Left lung (tissue), 14 donors: ENCODE measurements at regions of chr7 and their contacts with region 1.

Region 1: DNA sequence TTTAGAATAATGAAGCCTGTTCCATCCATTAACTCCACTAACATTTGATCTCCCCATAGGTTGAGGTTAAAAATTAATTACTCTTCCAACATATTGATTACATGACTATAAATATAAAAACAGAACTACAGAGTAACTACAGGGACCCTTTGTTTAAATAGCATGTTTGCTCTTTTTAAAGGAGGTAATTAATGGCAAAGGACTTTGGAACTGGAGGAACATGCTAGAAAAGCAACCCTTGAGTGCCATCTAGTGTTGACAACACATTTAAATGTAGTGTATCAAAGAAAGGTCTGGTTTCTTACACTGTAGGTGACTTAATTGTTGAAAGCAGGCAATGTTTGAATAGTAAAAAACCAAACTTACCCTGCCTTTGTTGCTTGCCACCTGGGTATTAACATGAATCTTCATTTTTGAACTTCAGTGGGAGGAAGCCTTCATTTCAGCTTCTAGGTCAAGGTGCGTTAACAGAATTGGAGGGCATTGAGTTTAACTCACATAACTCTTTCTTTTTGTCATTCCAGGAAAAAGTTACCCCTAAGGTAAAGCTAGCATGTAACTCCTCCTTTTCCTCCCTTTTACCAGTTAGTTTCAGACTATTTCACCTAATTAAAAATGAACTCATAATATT is 52.6 kb upstream of the CAPZA2 start:
- DNase-seq: peak in 2 of 4 donors; percentile 68 to 83
- ATAC-seq: peak; percentile 93
- H3K4me3 ChIP-seq: no peak overlapping the region
- H3K27ac ChIP-seq: no peak overlapping the region
- H3K4me1 ChIP-seq: peaks cover 0 to 7% of the 10 kb centered on the region in 2 donors
- H3K27me3 ChIP-seq: no peaks in the 10 kb centered on the region
- CTCF ChIP-seq: peak; percentile 40 to 57

Region 2: DNA sequence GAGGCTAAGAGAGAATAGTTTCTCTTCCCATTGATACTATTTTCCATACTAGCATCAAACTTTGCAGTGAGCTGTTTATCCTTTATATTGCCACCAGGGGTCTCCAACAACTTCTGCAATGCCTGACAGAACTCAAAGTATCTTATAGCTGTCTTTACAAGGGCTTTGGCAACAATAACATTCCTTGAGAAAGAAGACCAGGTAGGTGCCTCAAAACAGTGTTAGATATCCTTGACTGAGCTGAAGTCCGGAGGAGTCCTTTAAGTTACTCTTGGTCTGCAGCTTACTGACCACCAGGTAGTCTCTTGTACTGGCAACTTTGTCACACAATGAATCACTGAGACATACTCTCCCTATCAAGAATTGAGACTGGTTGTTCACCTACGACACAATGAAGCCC is 629.4 kb before region 1 on chr7:
- intact Hi-C with region 1: loop called in 1 of 2 experiments (anchors 5 kb)
- DNase-seq: peak in 2 of 4 donors; percentile 31 to 52
- ATAC-seq: peak; percentile 90
- H3K4me3 ChIP-seq: no peak overlapping the region
- H3K27ac ChIP-seq: no peak overlapping the region
- H3K4me1 ChIP-seq: no peaks in the 10 kb centered on the region
- H3K27me3 ChIP-seq: no peaks in the 10 kb centered on the region
- CTCF ChIP-seq: peak; percentile 65 to 81

Region 3: DNA sequence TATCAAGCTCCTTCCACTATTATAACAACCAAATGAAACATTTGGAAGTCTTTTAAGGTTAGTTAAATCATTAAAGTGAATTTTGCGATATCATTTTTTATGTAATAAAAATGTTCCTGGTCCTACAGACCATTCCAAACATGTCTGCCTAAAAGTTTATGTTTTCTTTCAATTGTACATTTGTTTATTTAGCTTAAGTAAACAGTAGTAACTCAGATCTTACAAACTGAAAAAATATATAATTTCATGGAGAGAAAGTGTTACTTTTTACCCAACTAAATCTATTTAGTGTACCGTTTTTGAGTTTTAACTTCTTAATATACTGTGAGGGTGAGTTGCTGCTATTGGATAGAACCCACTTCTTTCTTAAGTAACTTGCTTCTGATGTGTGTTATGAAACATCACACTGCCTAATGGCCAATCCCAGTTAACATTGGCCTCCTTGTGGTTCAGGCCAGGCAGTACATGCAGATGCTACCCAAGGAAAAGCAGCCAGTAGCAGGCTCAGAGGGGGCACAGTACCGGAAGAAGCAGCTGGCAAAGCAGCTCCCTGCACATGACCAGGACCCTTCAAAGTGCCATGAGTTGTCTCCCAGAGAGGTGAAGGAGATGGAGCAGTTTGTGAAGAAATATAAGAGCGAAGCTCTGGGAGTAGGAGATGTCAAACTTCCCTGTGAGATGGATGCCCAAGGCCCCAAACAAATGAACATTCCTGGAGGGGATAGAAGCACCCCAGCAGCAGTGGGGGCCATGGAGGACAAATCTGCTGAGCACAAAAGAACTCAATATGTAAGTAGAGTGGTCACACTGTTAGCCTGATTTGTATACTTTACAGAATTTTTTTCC is 559.8 kb before region 1 on chr7:
- intact Hi-C with region 1: loop called in 1 of 2 experiments (anchors 10 kb)
- DNase-seq: no peak
- ATAC-seq: peak; percentile 66
- H3K4me3 ChIP-seq: no peak overlapping the region
- H3K27ac ChIP-seq: no peak overlapping the region
- H3K4me1 ChIP-seq: no peaks in the 10 kb centered on the region
- H3K27me3 ChIP-seq: no peaks in the 10 kb centered on the region
- CTCF ChIP-seq: peak; percentile 18 to 39

Region 4: GRCh38 chr7:116647290-116647689 is 162.5 kb before region 1 on chr7:
- intact Hi-C with region 1: no loop called
- DNase-seq: no peak
- ATAC-seq: no peak
- H3K4me3 ChIP-seq: no peak overlapping the region
- H3K27ac ChIP-seq: no peak overlapping the region
- H3K4me1 ChIP-seq: no peaks in the 10 kb centered on the region
- H3K27me3 ChIP-seq: no peaks in the 10 kb centered on the region
- CTCF ChIP-seq: no peak